Psoas muscle (tissue), 8 donors: ENCODE measurements at regions of chr14 and their contacts with region 1.

Region 1: DNA sequence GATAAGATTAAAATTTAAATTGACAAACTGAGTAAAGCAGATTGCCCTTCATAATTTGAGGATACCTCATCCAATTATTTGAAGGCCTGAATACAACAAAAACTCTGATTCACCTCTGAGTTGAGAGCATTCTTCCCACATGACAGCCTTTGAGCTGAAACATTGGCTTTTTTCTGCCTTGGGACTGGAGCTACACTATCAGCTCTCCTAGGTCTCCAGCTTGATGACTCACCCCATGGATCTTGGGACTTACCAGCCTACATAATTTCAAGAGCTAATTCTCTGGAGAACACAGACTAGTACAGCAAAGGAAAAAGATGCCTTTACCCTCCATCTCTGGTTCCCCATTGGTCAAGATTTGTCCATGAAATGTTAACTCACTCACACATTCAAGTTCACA is 555.1 kb downstream of the FOXG1 start:
- DNase-seq: no peak
- ATAC-seq: no peak
- H3K4me3 ChIP-seq: no peak overlapping the region
- H3K27ac ChIP-seq: no peak overlapping the region
- H3K4me1 ChIP-seq: no peaks in the 10 kb centered on the region
- H3K27me3 ChIP-seq: no peaks in the 10 kb centered on the region
- CTCF ChIP-seq: no peak

Region 2: DNA sequence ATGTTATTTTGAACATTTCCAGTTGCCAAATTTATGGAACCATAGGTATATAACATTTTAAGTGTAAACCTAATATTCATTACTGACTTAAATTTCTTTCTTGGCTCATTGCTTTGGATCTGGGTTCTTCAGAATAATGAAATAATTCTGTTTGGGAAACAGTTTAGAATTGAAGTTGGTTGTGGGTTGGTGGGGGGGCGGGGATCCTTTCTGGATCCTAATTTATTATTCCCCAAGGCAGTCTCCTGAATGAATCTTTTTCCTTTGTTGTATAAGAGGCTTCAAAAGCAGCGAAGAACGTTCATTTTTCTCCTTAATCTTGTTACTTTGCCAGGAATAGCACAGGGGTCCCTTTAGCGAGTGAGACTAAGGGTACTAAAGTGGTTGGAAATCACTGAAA is 229.5 kb before region 1 on chr14:
- intact Hi-C with region 1: no loop called
- DNase-seq: no peak
- ATAC-seq: no peak
- H3K4me3 ChIP-seq: no peak overlapping the region
- H3K27ac ChIP-seq: no peak overlapping the region
- H3K4me1 ChIP-seq: no peaks in the 10 kb centered on the region
- H3K27me3 ChIP-seq: no peaks in the 10 kb centered on the region
- CTCF ChIP-seq: no peak

Region 3: GRCh38 chr14:29684926-29685325 is 363.3 kb after region 1 on chr14:
- intact Hi-C with region 1: loop called in 1 of 2 experiments (anchors 5 kb)
- DNase-seq: no peak
- ATAC-seq: no peak
- H3K4me3 ChIP-seq: no peak overlapping the region
- H3K27ac ChIP-seq: no peak overlapping the region
- H3K4me1 ChIP-seq: no peaks in the 10 kb centered on the region
- H3K27me3 ChIP-seq: no peaks in the 10 kb centered on the region
- CTCF ChIP-seq: no peak